ENCODE measurements at regions of chr2 and their contacts with region 1.

Region 1: GRCh38 chr2:160968182-160968581 is 192.0 kb upstream of the TANK start:
- DNase-seq: no peak
- H3K4me3 ChIP-seq: no peak overlapping the region
- CTCF ChIP-seq: no peak
- POLR2A ChIP-seq: no peak

Region 2: DNA sequence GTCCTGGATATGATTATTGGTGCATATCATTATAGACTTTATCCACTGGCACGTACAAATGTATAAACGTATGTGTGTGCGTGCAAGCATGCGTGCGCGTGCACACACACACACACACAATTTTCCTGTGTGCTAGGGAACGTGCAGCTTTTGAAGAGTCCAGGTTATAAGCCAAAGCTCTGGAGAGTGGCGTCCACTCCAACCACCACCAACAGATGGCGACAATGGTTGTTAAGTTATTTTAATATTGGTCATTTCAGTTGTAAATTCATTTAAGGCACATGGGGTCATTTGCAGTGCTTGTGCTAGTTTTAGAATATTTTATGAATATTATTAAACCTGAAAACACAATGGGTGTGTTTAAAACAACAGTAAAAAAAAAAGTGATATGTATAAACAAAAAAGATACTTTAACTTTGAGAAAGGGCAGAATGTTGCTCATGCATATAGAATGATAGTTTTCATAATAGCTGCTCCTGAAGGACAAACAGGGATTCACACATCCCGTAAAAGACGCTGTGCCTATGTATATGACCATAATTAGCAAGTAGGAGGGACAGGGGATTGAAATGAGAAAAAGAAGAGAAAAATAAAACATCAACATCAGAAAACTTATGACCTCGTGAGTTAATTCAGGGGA is 643.9 kb before region 1 on chr2:
- intact Hi-C with region 1: loop called (anchors 10 kb)
- DNase-seq: no peak
- H3K4me3 ChIP-seq: no peak overlapping the region
- CTCF ChIP-seq: no peak
- POLR2A ChIP-seq: no peak

Region 3: GRCh38 chr2:160406591-160407392 is 561.4 kb before region 1 on chr2:
- intact Hi-C with region 1: no loop called
- DNase-seq: peak; percentile 74 to 92
- H3K4me3 ChIP-seq: peak overlapping the region; percentile 81
- CTCF ChIP-seq: no peak
- POLR2A ChIP-seq: no peak

Region 4: DNA sequence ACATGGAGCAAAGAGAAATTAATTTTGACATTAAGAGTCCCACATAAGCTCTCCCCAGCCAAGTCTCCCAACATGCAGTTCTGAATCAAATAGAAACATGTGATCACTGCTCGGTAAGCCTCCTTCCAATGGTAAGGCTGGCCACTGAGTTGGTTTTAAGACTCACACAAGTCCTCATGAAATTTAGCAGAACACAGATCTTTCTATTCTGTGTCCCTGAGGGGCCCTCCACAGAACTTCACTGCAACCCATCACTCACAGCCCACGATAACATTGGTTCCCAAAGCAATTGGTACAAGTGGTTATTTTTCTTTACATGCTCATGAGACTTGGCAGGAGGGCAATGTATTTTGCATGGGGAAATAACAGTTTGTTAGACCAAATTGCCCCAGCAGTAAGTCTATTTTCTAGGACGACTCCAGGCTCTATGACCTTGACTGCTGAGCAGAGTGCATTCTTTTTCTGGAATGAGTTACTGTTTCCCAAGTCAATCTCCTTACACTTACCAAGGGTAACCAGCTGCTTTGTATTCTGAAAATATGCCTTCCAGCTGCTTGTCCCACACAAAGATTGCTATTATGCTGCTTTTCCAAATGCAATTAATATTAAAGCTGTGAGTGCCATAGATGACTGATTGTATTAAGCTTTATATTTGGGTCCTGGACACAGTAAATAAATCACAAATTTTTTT is 49.7 kb after region 1 on chr2:
- intact Hi-C with region 1: no loop called
- DNase-seq: no peak
- H3K4me3 ChIP-seq: no peak overlapping the region
- CTCF ChIP-seq: no peak
- POLR2A ChIP-seq: no peak